ENCODE measurements at regions of chr6 and their contacts with region 1.

Region 1: DNA sequence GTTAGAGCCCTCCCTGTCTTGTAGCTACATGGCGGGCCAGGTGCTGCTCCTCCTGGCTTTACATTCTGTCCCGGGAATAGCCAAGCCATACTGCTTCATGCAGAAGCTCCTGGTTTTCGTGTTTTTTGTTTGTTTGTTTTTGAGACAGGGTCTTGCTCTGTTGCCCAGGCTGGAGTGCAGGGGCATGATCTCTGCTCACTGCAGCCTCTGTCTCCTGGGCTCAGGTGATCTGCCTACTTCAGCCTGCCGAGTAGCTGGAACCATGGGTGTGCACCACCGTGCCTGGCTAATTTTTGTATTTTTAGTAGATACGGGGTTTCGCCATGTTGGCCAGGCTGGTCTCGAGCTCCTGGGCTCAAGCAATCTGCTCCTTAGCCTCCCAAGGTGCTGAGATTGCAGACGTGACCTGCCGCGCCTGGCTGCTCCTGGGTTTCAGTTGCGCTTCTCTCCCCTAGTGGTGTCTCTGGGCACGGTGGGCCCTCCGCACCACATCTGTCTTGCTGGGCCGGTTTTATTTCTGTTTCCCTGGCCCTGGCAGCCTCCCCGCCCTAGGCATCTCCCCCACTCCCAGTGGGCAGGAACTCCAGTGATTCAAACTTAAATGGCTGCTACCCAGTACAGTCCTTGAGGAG is 12.9 kb downstream of the CDYL start:
- DNase-seq: no peak
- H3K4me3 ChIP-seq: no peak overlapping the region
- H3K27ac ChIP-seq: no peak overlapping the region
- H3K4me1 ChIP-seq: peaks cover 11 to 55% (median 28%) of the 10 kb centered on the region in 4 donors
- H3K27me3 ChIP-seq: no peaks in the 10 kb centered on the region
- CTCF ChIP-seq: no peak
- EP300 ChIP-seq: no peak
- POLR2A ChIP-seq: no peak

Region 2: GRCh38 chr6:4936681-4937041 is 147.6 kb after region 1 on chr6:
- intact Hi-C with region 1: loop called (anchors 10 kb)
- DNase-seq: peak in 1 of 2 donors; percentile 77
- H3K4me3 ChIP-seq: no peak overlapping the region
- H3K27ac ChIP-seq: no peak overlapping the region
- H3K4me1 ChIP-seq: peaks cover 2 to 35% (median 12%) of the 10 kb centered on the region in 4 donors
- H3K27me3 ChIP-seq: no peaks in the 10 kb centered on the region
- CTCF ChIP-seq: peak in 5 of 7 experiments; percentile 47 to 72 (median 53)
- EP300 ChIP-seq: no peak
- POLR2A ChIP-seq: no peak

Measured in stomach (tissue), 19 donors.